ENCODE measurements at regions of chr12 and their contacts with region 1.

Region 1: DNA sequence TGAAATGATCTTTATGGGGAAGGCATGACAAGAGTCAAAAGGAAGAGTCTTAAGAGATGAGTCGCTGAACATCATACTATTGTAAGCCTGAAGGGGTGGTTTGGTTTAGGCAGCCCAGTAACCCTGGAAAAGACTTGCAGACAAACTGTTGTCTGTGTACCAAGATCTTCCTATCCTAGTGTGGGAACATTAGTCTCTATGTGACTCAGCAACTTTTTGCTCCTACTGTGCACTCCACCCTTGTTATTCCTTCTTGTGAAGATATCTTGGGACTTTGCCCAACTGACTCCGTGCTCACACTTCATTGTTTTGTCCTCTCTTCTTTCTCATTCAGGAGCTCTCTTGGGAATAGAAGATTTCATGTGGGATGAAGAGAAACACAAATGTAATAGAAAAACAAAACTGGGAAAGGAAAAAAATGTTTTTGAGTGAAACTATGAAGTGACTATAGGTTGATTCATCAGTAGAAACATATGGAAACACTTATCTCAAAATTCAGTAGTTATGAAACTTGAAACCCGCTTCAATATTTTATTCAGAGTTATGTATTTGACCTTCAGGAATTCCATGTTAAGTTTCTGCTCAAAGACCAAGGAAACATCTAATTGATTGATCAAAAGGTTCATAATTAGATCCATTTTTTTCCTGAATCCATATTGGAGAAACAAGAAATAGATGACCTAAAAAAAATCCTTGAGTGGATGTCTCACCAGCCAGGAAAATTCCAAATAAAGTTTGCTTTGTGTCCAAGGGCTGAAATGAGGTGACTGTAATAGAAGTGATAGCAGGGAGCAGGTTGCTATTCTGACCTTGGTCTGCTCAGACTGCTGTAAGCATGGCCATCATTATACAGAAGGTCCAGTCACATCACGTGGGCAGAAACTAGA is 67.2 kb downstream of the BTG1 start:
- DNase-seq: no peak
- H3K4me3 Mint-ChIP-seq: no peak overlapping the region
- H3K27ac Mint-ChIP-seq: peak overlapping the region; percentile 75
- H3K4me1 Mint-ChIP-seq: peaks cover 80% of the 10 kb centered on the region
- H3K27me3 Mint-ChIP-seq: no peaks in the 10 kb centered on the region
- CTCF ChIP-seq: no peak

Region 2: DNA sequence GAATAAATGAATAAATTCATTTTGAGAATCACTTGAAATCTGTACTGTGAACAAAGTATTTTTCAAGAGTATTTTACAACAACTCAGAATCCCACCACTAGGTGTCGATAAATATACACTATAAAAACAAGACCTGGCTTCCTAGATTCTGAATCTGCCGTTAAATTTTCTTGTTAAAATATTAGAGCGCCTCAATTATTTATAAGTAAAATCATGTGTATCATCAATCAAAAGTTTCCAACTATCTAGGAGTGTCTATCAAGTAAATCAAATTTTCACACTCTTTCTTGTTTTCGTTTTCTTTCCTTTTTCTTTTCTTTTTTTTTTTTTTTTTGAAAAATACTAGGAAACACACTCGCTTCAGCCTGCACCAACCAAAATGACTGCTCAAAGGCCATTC is 716.5 kb before region 1 on chr12:
- CTCF ChIA-PET with region 1: interaction called, 15 read pairs
- intact Hi-C with region 1: no loop called
- DNase-seq: no peak
- H3K4me3 Mint-ChIP-seq: peak overlapping the region; percentile 8
- H3K27ac Mint-ChIP-seq: no peak overlapping the region
- H3K4me1 Mint-ChIP-seq: peaks cover 26% of the 10 kb centered on the region
- H3K27me3 Mint-ChIP-seq: no peaks in the 10 kb centered on the region
- CTCF ChIP-seq: peak; percentile 58

Region 3: GRCh38 chr12:91588874-91589454 is 489.4 kb before region 1 on chr12:
- CTCF ChIA-PET with region 1: no interaction called
- intact Hi-C with region 1: loop called (anchors 10 kb)
- DNase-seq: no peak
- H3K4me3 Mint-ChIP-seq: no peak overlapping the region
- H3K27ac Mint-ChIP-seq: no peak overlapping the region
- H3K4me1 Mint-ChIP-seq: peaks cover 6% of the 10 kb centered on the region
- H3K27me3 Mint-ChIP-seq: no peaks in the 10 kb centered on the region
- CTCF ChIP-seq: no peak

Region 4: GRCh38 chr12:92546635-92547348 is 468.4 kb after region 1 on chr12:
- CTCF ChIA-PET with region 1: no interaction called
- intact Hi-C with region 1: loop called (anchors 5 kb)
- DNase-seq: peak; percentile 41
- H3K4me3 Mint-ChIP-seq: peak overlapping the region; percentile 17
- H3K27ac Mint-ChIP-seq: peak overlapping the region; percentile 74
- H3K4me1 Mint-ChIP-seq: peaks cover 68% of the 10 kb centered on the region
- H3K27me3 Mint-ChIP-seq: no peaks in the 10 kb centered on the region
- CTCF ChIP-seq: no peak

Measured in Calu3 (cell line).